Heart right ventricle (tissue), 16 donors: ENCODE measurements at regions of chr12 and their contacts with region 1.

Region 1: DNA sequence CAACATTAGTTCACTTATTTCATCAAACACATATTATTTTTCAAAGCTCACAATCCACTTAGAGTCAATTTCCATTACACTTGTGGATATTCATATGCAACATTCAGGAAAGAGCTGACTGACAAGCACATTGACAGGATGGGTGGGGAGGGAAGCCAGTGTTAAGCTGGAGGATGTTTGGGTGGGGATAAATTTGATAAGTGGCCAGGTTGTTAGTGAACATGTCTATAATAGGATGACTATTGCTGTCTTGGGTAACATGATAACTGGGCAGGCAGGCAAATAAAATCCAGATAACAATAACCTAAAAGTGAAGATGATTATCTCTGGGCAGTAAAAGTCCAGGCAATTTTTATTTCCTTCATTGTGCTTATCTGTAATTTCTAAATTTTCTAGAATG is 73.8 kb upstream of the OSBPL8 start:
- DNase-seq: peak in 1 of 2 donors; percentile 43
- ATAC-seq: peak in 7 of 8 donors; percentile 76 to 96 (median 86)
- H3K4me3 ChIP-seq: no peak overlapping the region
- H3K27ac ChIP-seq: peak overlapping the region in 7 of 10 donors; percentile 47 to 69 (median 56)
- H3K4me1 ChIP-seq: peaks cover 0 to 24% (median 0%) of the 10 kb centered on the region in 9 donors
- H3K27me3 ChIP-seq: no peaks in the 10 kb centered on the region
- CTCF ChIP-seq: no peak

Region 2: GRCh38 chr12:76670776-76671175 is 37.4 kb after region 1 on chr12:
- intact Hi-C with region 1: loop called in 1 of 10 experiments (anchors 5 kb)
- DNase-seq: no peak
- ATAC-seq: no peak
- H3K4me3 ChIP-seq: no peak overlapping the region
- H3K27ac ChIP-seq: no peak overlapping the region
- H3K4me1 ChIP-seq: peaks cover 0 to 7% (median 0%) of the 10 kb centered on the region in 9 donors
- H3K27me3 ChIP-seq: no peaks in the 10 kb centered on the region
- CTCF ChIP-seq: no peak

Region 3: GRCh38 chr12:76720068-76720467 is 86.7 kb after region 1 on chr12:
- intact Hi-C with region 1: no loop called
- DNase-seq: no peak
- ATAC-seq: no peak
- H3K4me3 ChIP-seq: no peak overlapping the region
- H3K27ac ChIP-seq: no peak overlapping the region
- H3K4me1 ChIP-seq: no peaks in the 10 kb centered on the region
- H3K27me3 ChIP-seq: no peaks in the 10 kb centered on the region
- CTCF ChIP-seq: no peak

Region 4: DNA sequence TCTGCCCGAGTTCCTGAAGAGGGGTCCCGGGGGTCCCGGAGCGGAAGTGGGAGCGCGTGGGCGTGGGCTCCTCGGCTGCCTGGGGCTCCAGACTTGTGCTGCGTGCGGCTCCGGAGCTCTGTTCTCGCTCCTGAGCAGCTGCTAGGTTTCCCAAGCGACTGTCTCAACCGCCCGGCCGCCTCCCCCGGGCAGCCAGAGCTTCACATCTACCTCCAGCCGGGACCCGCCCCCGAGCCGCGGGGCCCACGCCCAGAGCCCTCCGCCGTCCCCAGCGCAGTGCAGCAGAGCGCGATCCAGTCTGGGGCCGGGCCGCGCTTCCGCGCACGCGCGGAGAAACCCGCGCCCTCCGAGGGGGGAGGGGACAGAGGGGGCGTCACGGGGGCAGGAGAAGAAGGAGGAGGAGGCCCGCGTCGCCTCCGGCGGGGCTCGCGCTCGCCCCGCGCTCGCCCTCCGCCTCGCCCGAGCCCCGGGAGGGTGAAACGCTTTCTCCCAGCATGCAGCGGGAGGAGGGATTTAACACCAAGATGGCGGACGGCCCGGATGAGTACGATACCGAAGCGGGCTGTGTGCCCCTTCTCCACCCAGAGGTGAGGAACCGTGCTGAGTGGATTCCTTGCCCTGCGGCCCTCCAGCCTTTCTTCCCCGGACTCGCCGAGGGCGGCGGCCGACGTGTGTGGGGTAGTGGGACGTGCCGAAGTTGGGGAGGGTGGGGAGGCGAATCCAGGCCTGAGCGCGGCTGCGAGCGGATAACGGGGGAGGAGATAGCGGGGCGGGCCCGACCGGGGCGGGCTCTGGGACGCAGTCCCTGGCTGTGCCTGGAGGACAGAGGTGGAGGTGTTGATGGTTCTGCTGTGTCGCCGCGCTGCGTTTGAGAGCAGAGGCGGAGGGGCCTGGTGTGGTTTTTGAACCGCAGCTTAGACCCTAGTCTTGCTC is 130.6 kb after region 1 on chr12 and contains the start of gene ZDHHC17:
- intact Hi-C with region 1: loop called in 1 of 10 experiments (anchors 5 kb)
- DNase-seq: peak; percentile 90 to 94
- ATAC-seq: peak; percentile 94 to 99 (median 96)
- H3K4me3 ChIP-seq: peak within 1 kb of the TSS; percentile 67 to 97 (median 88)
- H3K27ac ChIP-seq: peak within 1 kb of the TSS; percentile 87 to 99 (median 97)
- H3K4me1 ChIP-seq: peaks cover 0 to 55% (median 43%) of the 10 kb centered on the region in 9 donors
- H3K27me3 ChIP-seq: no peaks in the 10 kb centered on the region
- CTCF ChIP-seq: no peak
- total RNA-seq, gene ZDHHC17: 17.4 to 28.0 (median 23.4) TPM